GM12878 (cell line): ENCODE measurements at regions of chr5 and their contacts with region 1.

Region 1: DNA sequence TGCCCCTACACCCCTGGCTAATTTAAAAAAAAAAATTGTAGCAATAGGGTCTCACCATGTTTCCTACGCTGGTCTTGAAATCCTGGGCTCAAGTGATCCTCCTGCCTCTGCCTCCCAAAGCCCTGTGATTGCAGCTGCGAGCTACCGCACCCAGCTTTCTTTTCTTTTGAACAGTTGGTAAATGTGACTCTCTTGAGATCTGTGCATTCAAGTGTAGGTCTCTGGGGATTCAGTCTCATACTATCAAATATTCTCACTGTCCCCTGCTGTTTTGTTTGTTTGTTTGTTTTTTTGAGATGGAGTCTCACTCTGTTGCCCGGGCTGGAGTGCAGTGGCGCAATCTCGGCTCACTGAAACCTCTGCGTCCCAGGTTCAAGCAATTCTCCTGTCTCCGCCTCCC is 42.3 kb upstream of the CXXC5 start:
- DNase-seq: peak; percentile 28
- ATAC-seq: peak; percentile 80
- H3K4me3 ChIP-seq: no peak overlapping the region
- H3K27ac ChIP-seq: peak overlapping the region; percentile 31; the same call in 1 of the 2 replicates
- H3K4me1 ChIP-seq: peaks cover 10% of the 10 kb centered on the region; the same call in 1 of the 2 replicates
- H3K27me3 ChIP-seq: no peaks in the 10 kb centered on the region
- CTCF ChIP-seq: no peak
- EP300 ChIP-seq: no peak
- POLR2A ChIP-seq: no peak
- RAD21 ChIP-seq: no peak

Region 2: GRCh38 chr5:139593716-139594319 is 12.1 kb before region 1 on chr5:
- CTCF ChIA-PET with region 1: interaction called, 6 read pairs
- POLR2A ChIA-PET with region 1: interaction called, 5 read pairs
- RAD21 ChIA-PET with region 1: interaction called, 11 read pairs
- SMC1A ChIA-PET with region 1: interaction called, 26 read pairs
- in situ Hi-C with region 1: no loop called
- intact Hi-C with region 1: no loop called
- DNase-seq: no peak
- ATAC-seq: peak; percentile 44
- H3K4me3 ChIP-seq: no peak overlapping the region
- H3K27ac ChIP-seq: peak overlapping the region; percentile 34
- H3K4me1 ChIP-seq: peaks cover 25% of the 10 kb centered on the region
- H3K27me3 ChIP-seq: no peaks in the 10 kb centered on the region
- CTCF ChIP-seq: no peak
- EP300 ChIP-seq: no peak
- POLR2A ChIP-seq: no peak
- RAD21 ChIP-seq: no peak